GM12878 (cell line): ENCODE measurements at regions of chr2 and their contacts with region 1.

Region 1: DNA sequence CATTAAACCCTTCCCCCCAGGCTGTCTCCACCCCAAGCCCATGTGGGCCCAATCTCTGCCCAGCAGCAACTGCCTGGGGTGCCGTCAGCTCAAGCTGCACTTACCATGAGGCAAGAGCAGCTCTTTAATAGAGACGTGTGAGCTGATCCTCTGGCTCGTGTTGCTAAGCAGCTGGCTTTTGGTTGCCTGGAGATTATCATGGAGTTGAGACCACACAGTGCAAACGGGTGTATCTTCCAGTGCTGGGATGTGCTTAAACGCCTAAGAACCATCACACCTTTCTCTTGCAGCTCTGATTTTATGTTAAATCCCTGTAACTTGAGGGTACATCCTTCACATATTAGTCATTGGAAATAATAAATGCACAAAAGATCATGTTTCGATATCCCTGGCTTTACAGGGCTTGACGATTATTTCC is 271.1 kb downstream of the PRKCE start:
- DNase-seq: no peak
- ATAC-seq: no peak
- H3K4me3 ChIP-seq: no peak overlapping the region
- H3K27ac ChIP-seq: no peak overlapping the region
- H3K4me1 ChIP-seq: peaks cover 22% of the 10 kb centered on the region
- H3K27me3 ChIP-seq: no peaks in the 10 kb centered on the region
- CTCF ChIP-seq: no peak
- EP300 ChIP-seq: no peak
- POLR2A ChIP-seq: no peak
- RAD21 ChIP-seq: no peak

Region 2: DNA sequence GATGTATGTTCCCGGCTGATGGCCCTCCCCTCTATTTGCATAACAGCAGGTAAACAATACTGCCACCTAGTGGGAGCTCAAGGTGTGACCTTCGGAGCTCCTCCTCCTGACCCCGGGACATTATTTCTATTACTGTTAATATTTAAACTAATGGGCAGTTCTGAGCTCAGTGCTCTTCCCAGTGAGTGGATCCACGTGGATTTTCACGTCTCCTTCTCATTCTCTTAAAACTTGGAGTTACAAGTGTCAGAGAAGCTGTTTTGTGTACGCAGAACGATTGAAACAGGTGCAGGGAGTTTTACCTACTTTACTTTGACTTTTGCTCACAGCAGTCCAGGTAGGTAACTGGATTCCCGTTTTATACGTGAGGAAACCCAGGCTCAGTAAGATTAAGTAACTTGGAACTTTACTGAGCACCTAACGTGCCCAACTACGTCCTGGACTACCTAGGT is 143.8 kb before region 1 on chr2:
- CTCF ChIA-PET with region 1: interaction called, 13 read pairs
- POLR2A ChIA-PET with region 1: no interaction called
- RAD21 ChIA-PET with region 1: no interaction called
- SMC1A ChIA-PET with region 1: no interaction called
- in situ Hi-C with region 1: no loop called
- intact Hi-C with region 1: no loop called
- DNase-seq: peak; percentile 11
- ATAC-seq: peak; percentile 90
- H3K4me3 ChIP-seq: no peak overlapping the region
- H3K27ac ChIP-seq: no peak overlapping the region
- H3K4me1 ChIP-seq: peaks cover 16% of the 10 kb centered on the region
- H3K27me3 ChIP-seq: no peaks in the 10 kb centered on the region
- CTCF ChIP-seq: peak; percentile 49 to 60 (median 53); a peak in 5 of 6 replicates
- EP300 ChIP-seq: no peak
- POLR2A ChIP-seq: no peak
- RAD21 ChIP-seq: peak; percentile 72

Region 3: GRCh38 chr2:45851613-45852304 is 70.8 kb before region 1 on chr2:
- CTCF ChIA-PET with region 1: interaction called, 3 read pairs
- POLR2A ChIA-PET with region 1: no interaction called
- RAD21 ChIA-PET with region 1: interaction called, 3 read pairs
- SMC1A ChIA-PET with region 1: interaction called, 10 read pairs
- in situ Hi-C with region 1: no loop called
- intact Hi-C with region 1: no loop called
- DNase-seq: no peak
- ATAC-seq: no peak
- H3K4me3 ChIP-seq: no peak overlapping the region
- H3K27ac ChIP-seq: no peak overlapping the region
- H3K4me1 ChIP-seq: peaks cover 27% of the 10 kb centered on the region
- H3K27me3 ChIP-seq: no peaks in the 10 kb centered on the region
- CTCF ChIP-seq: no peak
- EP300 ChIP-seq: no peak
- POLR2A ChIP-seq: no peak
- RAD21 ChIP-seq: no peak

Region 4: DNA sequence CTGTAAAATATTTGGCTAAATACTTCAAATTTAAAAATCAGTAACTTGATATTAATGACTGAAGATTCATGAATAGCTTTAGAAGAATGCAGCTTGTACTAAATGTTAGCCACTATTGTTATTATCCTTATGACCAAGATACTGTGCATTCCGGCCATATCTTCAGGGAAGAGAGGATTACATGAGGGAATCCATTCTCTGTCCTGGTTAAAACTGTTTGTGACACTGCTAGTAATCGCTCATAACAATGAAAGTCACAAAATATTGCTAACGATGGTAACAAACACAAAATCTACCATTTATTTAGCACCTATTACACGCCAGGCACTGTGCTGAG is 53.4 kb before region 1 on chr2:
- CTCF ChIA-PET with region 1: interaction called, 4 read pairs
- POLR2A ChIA-PET with region 1: interaction called, 5 read pairs
- RAD21 ChIA-PET with region 1: interaction called, 6 read pairs
- SMC1A ChIA-PET with region 1: interaction called, 10 read pairs
- in situ Hi-C with region 1: no loop called
- intact Hi-C with region 1: no loop called
- DNase-seq: no peak
- ATAC-seq: no peak
- H3K4me3 ChIP-seq: no peak overlapping the region
- H3K27ac ChIP-seq: no peak overlapping the region
- H3K4me1 ChIP-seq: peaks cover 23% of the 10 kb centered on the region
- H3K27me3 ChIP-seq: no peaks in the 10 kb centered on the region
- CTCF ChIP-seq: no peak
- EP300 ChIP-seq: no peak
- POLR2A ChIP-seq: no peak
- RAD21 ChIP-seq: no peak

Region 5: DNA sequence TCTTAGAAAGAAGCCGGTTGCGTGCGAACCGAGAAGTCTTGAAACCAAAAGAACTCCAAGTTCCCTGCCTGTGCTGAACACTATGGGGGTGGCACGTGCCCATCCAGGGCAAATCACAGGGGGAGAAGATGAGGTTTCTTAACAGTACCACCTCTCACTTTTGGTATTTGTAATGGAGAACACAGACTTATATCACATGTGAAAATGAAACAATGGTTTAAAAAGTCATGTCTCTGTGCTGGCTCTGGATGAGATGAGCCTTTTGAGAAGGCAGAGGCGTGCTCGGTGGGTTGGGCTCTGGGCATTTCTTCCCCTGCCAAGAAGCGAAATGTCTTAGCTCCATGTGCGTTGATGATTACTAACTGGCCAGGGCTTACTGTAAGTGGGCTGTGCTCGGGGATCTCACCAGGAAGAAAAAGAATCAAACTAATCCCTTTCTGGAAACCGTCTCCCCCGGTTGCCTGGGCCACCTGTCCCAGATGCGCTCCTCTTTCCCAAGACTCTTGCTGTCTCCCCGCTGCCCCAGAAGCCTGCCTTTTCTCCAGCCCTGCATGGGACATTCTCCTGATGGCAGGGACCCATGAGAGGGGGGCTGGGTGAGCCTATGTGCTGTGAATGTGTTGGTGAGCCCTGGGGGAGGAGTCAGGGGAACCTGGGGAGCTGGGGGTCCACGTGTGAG is 18.2 kb before region 1 on chr2:
- CTCF ChIA-PET with region 1: interaction called, 4 read pairs
- POLR2A ChIA-PET with region 1: interaction called, 8 read pairs
- RAD21 ChIA-PET with region 1: interaction called, 10 read pairs
- SMC1A ChIA-PET with region 1: interaction called, 31 read pairs
- in situ Hi-C with region 1: no loop called
- intact Hi-C with region 1: no loop called
- DNase-seq: no peak
- ATAC-seq: peak; percentile 97
- H3K4me3 ChIP-seq: no peak overlapping the region
- H3K27ac ChIP-seq: peak overlapping the region; percentile 79
- H3K4me1 ChIP-seq: peaks cover 35% of the 10 kb centered on the region
- H3K27me3 ChIP-seq: no peaks in the 10 kb centered on the region
- CTCF ChIP-seq: no peak
- EP300 ChIP-seq: peak; percentile 52 to 54; a peak in 1 of 4 replicates
- POLR2A ChIP-seq: no peak
- RAD21 ChIP-seq: no peak